CD4-positive, alpha-beta T cell (primary cell): ENCODE measurements at regions of chr1 and their contacts with region 1.

Region 1: DNA sequence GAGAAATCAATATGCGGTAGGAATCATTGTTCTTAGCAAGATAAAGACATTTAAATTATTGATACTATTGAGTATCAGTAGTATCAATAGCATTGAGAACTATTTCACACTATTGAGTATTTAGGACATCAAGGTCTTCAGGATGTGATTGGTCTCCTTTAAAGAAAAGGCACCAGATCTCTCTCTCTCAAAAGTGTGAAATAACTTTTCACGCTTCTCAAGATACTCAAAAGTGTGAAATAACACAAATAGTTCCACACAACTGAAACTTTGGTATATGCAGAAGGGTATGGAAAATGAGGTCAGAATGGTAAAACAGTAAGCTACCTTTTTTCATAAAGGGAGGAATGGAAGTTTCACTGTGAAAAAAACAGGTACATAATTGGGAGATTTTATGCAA is 6.7 kb upstream of the PYHIN1 start:
- DNase-seq: peak in 1 of 14 experiments; percentile 67
- ATAC-seq: no peak
- H3K4me3 ChIP-seq: no peak overlapping the region
- H3K4me3 Mint-ChIP-seq: no peak overlapping the region
- H3K27ac ChIP-seq: no peak overlapping the region
- H3K27ac Mint-ChIP-seq: no peak overlapping the region
- H3K4me1 ChIP-seq: no peaks in the 10 kb centered on the region
- H3K4me1 Mint-ChIP-seq: peaks cover 1% of the 10 kb centered on the region
- H3K27me3 ChIP-seq: no peaks in the 10 kb centered on the region
- H3K27me3 Mint-ChIP-seq: no peaks in the 10 kb centered on the region
- CTCF ChIP-seq: no peak

Region 2: DNA sequence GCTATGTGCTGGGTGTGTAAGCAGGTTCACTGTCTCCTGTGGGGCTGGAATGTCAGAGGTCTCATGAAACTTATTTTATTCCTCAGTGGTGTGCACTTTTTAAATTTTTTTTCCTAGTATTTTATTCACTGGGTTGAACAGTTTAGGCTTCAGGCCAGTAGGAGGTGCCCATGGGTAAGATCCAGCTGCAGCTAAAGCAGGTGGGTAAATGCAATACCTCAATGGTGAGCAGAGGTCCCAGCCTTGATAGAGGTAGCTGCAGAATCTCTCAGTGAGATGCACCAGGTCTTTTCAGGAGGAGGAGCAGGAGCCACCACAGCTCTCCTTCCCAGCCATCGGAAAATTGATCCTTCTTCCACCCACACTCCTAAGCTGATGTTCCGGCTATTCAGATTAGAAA is 131.1 kb before region 1 on chr1:
- CTCF ChIA-PET with region 1: no interaction called
- POLR2A ChIA-PET with region 1: no interaction called
- intact Hi-C with region 1: loop called in 1 of 2 experiments (anchors 5 kb)
- DNase-seq: peak in 10 of 14 experiments; percentile 6 to 57 (median 22)
- ATAC-seq: no peak
- H3K4me3 ChIP-seq: no peak overlapping the region
- H3K4me3 Mint-ChIP-seq: no peak overlapping the region
- H3K27ac ChIP-seq: no peak overlapping the region
- H3K27ac Mint-ChIP-seq: no peak overlapping the region
- H3K4me1 ChIP-seq: no peaks in the 10 kb centered on the region
- H3K4me1 Mint-ChIP-seq: no peaks in the 10 kb centered on the region
- H3K27me3 ChIP-seq: no peaks in the 10 kb centered on the region
- H3K27me3 Mint-ChIP-seq: peaks cover 6% of the 10 kb centered on the region
- CTCF ChIP-seq: peak; percentile 25

Region 3: GRCh38 chr1:158830904-158831507 is 93.7 kb before region 1 on chr1 and contains the start of gene MNDA:
- CTCF ChIA-PET with region 1: no interaction called
- POLR2A ChIA-PET with region 1: no interaction called
- intact Hi-C with region 1: no loop called
- DNase-seq: peak in 3 of 14 experiments; percentile 32 to 38 (median 38)
- ATAC-seq: no peak
- H3K4me3 ChIP-seq: peak within 1 kb of the TSS; percentile 10
- H3K4me3 Mint-ChIP-seq: no peak within 1 kb of the TSS
- H3K27ac ChIP-seq: no peak within 1 kb of the TSS
- H3K27ac Mint-ChIP-seq: no peak within 1 kb of the TSS
- H3K4me1 ChIP-seq: no peaks in the 10 kb centered on the region
- H3K4me1 Mint-ChIP-seq: no peaks in the 10 kb centered on the region
- H3K27me3 ChIP-seq: no peaks in the 10 kb centered on the region
- H3K27me3 Mint-ChIP-seq: no peaks in the 10 kb centered on the region
- CTCF ChIP-seq: no peak
- total RNA-seq, gene MNDA: 0.88 to 1.1 TPM

Region 4: GRCh38 chr1:158943059-158943458 is 18.4 kb after region 1 on chr1:
- CTCF ChIA-PET with region 1: no interaction called
- POLR2A ChIA-PET with region 1: no interaction called
- intact Hi-C with region 1: no loop called
- DNase-seq: no peak
- ATAC-seq: no peak
- H3K4me3 ChIP-seq: no peak overlapping the region
- H3K4me3 Mint-ChIP-seq: no peak overlapping the region
- H3K27ac ChIP-seq: no peak overlapping the region
- H3K27ac Mint-ChIP-seq: no peak overlapping the region
- H3K4me1 ChIP-seq: no peaks in the 10 kb centered on the region
- H3K4me1 Mint-ChIP-seq: no peaks in the 10 kb centered on the region
- H3K27me3 ChIP-seq: no peaks in the 10 kb centered on the region
- H3K27me3 Mint-ChIP-seq: peaks cover 3% of the 10 kb centered on the region
- CTCF ChIP-seq: no peak

Region 5: DNA sequence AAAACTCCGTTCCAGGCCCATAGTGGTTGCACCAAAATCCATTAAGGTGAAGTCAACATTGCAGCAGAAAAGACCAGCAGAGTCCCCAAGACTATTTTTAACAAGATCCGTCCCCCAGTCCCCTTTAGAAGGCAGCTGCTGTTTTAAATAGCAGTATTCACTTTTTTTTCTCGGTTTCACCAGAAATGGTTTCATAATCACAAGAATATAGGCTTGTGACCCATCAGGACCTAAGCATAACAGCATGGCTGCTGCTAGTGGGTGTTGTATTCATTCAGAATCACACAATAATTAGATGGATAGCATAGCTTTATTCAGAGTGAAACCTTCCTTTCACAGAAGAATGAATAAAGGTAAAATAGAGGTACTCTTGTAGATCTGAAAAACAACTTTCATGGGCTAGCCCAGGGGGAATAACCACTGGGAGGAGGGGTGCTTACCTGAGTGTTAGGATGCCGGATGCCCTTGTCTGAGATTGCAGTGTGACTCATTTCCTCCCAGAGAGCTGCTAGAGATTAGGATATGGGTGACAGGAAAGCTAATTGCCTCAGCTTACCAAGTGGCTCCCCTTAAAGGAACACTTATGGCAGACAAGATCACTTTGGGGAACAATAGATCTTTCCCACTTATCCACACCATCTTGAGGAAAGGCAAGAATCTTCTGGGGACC is 315.0 kb after region 1 on chr1:
- CTCF ChIA-PET with region 1: no interaction called
- POLR2A ChIA-PET with region 1: no interaction called
- intact Hi-C with region 1: no loop called
- DNase-seq: no peak
- ATAC-seq: no peak
- H3K4me3 ChIP-seq: no peak overlapping the region
- H3K4me3 Mint-ChIP-seq: no peak overlapping the region
- H3K27ac ChIP-seq: no peak overlapping the region
- H3K27ac Mint-ChIP-seq: no peak overlapping the region
- H3K4me1 ChIP-seq: no peaks in the 10 kb centered on the region
- H3K4me1 Mint-ChIP-seq: no peaks in the 10 kb centered on the region
- H3K27me3 ChIP-seq: no peaks in the 10 kb centered on the region
- H3K27me3 Mint-ChIP-seq: peaks cover 12% of the 10 kb centered on the region
- CTCF ChIP-seq: no peak